Endothelial cell of umbilical vein (primary cell): ENCODE measurements at regions of chr22 and their contacts with region 1.

Region 1: DNA sequence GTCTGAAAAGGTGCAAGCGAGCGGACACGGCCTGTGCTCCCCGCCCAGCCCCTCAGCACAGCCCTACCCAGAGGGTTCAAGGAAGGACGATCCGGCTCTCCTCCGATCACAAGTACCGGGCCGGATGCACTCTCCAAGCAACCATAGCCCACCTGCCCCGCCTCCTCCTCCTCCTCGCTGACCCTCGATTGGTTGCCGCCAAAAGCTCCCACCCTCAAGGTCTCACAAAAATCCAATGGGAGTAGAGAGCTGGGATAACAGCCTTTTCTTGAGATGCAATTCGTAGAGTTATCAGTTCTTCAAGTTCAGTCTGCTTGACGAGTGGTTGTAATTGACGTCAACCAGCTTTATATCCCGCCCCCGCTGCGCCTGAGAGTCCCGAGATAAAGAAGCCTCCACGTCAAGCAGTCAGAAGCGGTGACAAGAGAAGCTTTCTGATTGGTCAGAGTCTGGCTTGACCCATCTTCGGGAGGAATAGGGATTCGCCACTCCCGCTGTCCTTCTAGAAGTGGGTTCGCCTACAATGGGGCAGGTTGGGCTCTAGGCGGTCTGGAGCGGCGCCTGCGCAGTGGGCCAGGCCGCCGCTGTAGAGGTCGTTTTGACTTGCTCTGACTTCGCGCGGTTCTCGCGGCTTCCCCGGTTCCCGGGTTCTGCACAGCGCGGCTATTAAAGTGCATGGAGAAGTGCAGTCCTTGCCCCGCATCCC is at the start of gene IFT27:
- DNase-seq: peak; percentile 100
- H3K4me3 ChIP-seq: peak within 1 kb of the TSS; percentile 59 to 93 (median 75)
- H3K27ac ChIP-seq: no peak within 1 kb of the TSS
- H3K4me1 ChIP-seq: peaks cover 10% of the 10 kb centered on the region
- H3K27me3 ChIP-seq: no peaks in the 10 kb centered on the region
- CTCF ChIP-seq: no peak
- POLR2A ChIP-seq: peak; percentile 61
- total RNA-seq, gene IFT27: 30.5 and 33.7 TPM in 2 replicates

Region 2: GRCh38 chr22:36506637-36507517 is 269.2 kb before region 1 on chr22 and contains the start of gene FOXRED2:
- CTCF ChIA-PET with region 1: interaction called, 11 read pairs
- POLR2A ChIA-PET with region 1: no interaction called
- dilution Hi-C with region 1: no loop called
- intact Hi-C with region 1: no loop called
- DNase-seq: peak; percentile 82
- H3K4me3 ChIP-seq: peak within 1 kb of the TSS in 2 of 3 experiments; percentile 25 to 58
- H3K27ac ChIP-seq: peak within 1 kb of the TSS; percentile 30
- H3K4me1 ChIP-seq: peaks cover 10% of the 10 kb centered on the region
- H3K27me3 ChIP-seq: no peaks in the 10 kb centered on the region
- CTCF ChIP-seq: no peak
- POLR2A ChIP-seq: peak; percentile 83
- total RNA-seq, gene FOXRED2: 14.0 and 20.4 TPM in 2 replicates

Region 3: GRCh38 chr22:36569999-36570398 is 206.1 kb before region 1 on chr22:
- CTCF ChIA-PET with region 1: interaction called, 11 read pairs
- POLR2A ChIA-PET with region 1: no interaction called
- dilution Hi-C with region 1: no loop called
- intact Hi-C with region 1: no loop called
- DNase-seq: peak; percentile 10
- H3K4me3 ChIP-seq: no peak overlapping the region
- H3K27ac ChIP-seq: no peak overlapping the region
- H3K4me1 ChIP-seq: no peaks in the 10 kb centered on the region
- H3K27me3 ChIP-seq: peaks cover 2 to 5% of the 10 kb centered on the region in 2 experiments
- CTCF ChIP-seq: peak; percentile 12 to 55
- POLR2A ChIP-seq: no peak

Region 4: GRCh38 chr22:36762687-36763260 is 13.3 kb before region 1 on chr22:
- CTCF ChIA-PET with region 1: interaction called, 75 read pairs
- POLR2A ChIA-PET with region 1: interaction called, 3 read pairs
- dilution Hi-C with region 1: no loop called
- intact Hi-C with region 1: loop called (anchors 2 kb)
- DNase-seq: no peak
- H3K4me3 ChIP-seq: no peak overlapping the region
- H3K27ac ChIP-seq: no peak overlapping the region
- H3K4me1 ChIP-seq: no peaks in the 10 kb centered on the region
- H3K27me3 ChIP-seq: no peaks in the 10 kb centered on the region
- CTCF ChIP-seq: no peak
- POLR2A ChIP-seq: no peak

Region 5: DNA sequence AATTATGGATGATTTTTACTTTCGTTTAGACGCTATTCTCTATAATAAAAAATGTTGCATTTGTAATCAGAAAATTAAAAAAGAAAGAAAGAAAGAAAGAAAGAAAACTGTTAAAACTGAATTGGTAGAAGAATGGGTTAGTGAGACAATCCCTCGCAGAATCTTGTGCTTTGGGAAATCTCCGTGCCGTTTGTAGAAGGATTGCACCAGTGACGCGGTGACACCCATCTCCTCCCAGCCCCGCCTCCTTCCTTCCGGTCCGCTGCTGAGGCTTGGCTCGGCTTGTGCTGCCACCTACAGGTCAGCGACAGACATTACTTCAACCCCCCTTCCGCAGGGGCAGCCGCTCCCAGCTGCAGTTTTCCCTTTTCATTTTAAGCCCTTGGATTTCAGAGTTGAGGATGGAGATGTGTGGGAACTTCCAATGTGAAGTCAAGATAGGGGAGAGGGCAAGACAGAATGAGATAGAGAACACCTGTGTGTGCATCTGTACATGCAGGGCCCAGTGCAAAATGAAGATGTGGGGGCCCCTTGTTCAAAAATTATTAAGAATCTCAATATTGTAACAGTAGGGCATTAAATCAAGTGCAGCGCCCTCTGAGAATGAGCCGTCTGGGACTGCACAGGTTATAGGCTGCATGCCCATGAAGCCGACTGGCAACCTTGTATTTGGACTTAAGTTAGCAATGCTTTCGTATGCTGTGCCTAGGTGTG is 202.0 kb after region 1 on chr22:
- CTCF ChIA-PET with region 1: interaction called, 32 read pairs
- POLR2A ChIA-PET with region 1: no interaction called
- dilution Hi-C with region 1: no loop called
- intact Hi-C with region 1: no loop called
- DNase-seq: peak; percentile 75
- H3K4me3 ChIP-seq: peak overlapping the region; percentile 3 to 58 (median 32)
- H3K27ac ChIP-seq: no peak overlapping the region
- H3K4me1 ChIP-seq: no peaks in the 10 kb centered on the region
- H3K27me3 ChIP-seq: peaks cover under 1 to 5% of the 10 kb centered on the region in 2 experiments
- CTCF ChIP-seq: peak; percentile 84 to 89
- POLR2A ChIP-seq: no peak